Right ventricle myocardium inferior (tissue), 1 donor: ENCODE measurements at regions of chr4 and their contacts with region 1.

Region 1: DNA sequence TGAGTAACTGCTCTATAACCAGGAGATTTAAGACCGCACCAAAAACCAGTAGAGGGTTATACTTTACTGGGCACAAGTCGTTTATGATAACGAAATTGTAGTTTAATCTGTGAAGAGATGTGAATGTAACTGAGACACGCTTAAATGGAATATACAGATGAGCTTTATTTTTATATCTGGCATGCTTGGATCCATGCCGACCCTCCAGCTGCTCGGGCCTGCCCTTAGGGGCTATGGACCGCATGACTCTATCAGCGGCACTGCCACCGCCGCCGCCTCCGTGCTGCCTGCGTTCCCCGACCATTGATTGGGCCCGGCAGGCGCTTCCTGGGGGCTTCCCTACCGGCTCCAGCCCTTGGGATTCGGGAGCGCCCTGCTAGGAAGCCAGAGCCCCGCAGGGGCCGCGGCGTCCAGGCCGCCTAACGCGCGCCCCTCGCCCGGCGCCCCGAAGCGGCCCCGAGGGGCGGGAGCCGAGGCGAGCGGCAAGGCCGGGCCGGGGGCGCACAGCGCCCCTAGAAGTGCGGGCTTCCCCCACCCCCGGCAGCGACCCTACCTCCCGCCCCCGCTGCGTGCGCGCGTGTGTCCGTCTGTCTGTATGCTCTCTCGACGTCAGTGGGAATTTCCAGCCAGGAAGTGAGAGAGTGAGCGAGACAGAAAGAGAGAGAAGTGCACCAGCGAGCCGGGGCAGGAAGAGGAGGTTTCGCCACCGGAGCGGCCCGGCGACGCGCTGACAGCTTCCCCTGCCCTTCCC is at the start of gene NFKB1:
- DNase-seq: peak; percentile 90
- ATAC-seq: peak; percentile 65
- total RNA-seq, gene NFKB1: 20.6 TPM

Region 2: GRCh38 chr4:102263011-102263787 is 237.7 kb before region 1 on chr4:
- intact Hi-C with region 1: no loop called
- DNase-seq: no peak
- ATAC-seq: no peak

Region 3: DNA sequence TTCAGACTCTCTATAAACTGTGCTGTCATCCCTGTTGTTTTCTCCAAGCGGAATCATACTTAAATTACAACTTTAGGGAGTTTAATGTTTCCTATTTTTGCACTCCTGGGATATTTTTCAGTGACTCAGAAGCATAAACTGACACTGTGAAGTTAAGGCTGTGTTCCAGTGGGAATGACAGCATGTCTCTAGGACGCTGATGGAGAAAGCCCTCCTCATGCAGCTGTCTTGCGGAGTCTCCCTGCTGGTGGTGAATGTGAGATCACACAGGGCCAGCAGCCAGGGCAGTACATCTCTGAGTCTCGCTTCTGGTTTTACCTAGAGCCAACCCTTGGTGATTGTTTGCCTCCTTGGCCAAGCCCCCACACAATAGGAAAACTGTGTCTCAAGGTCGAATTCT is 53.6 kb after region 1 on chr4:
- intact Hi-C with region 1: loop called (anchors 2 kb)
- DNase-seq: peak; percentile 72
- ATAC-seq: peak; percentile 93

Region 4: DNA sequence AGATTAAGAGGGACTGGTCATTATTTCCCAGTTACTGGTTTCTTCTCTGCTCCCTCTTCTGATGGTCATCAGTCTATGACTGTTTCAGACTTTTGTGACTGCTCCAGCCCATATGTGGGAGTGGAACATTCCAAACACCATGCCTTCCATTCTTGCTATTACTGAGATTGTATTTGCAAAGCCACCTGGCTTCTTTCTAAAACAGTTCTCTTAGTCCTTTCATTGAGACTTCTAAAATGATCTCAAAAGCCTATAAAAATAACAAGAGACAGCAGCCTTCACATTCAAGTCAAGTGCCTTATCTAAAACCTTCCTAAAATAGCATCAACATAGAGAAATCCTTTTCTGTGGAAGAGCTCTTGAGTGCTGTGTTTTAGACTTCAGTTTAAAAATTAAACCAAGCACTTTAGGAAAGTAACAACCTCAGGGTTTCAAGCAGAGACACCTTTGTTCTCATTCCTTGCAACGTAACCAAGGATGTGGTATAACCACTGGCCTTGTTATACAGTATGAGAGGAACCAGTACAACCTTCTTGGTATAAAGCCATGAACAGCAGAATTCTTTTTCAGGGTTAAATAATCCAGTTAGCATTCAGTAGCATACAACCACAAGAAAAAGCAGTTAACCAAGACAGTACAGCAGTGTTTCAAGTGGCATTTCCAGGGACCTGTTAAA is 97.4 kb after region 1 on chr4:
- intact Hi-C with region 1: loop called (anchors 5 kb)
- DNase-seq: no peak
- ATAC-seq: peak; percentile 48

Region 5: GRCh38 chr4:103123114-103123513 is 622.2 kb after region 1 on chr4:
- intact Hi-C with region 1: no loop called
- DNase-seq: no peak
- ATAC-seq: no peak